HepG2 (cell line): ENCODE measurements at regions of chr17 and their contacts with region 1.

Region 1: GRCh38 chr17:64599827-64600226 is 62.3 kb downstream of the SMURF2 start:
- DNase-seq: no peak
- ATAC-seq: no peak
- H3K4me3 ChIP-seq: no peak overlapping the region
- H3K27ac ChIP-seq: no peak overlapping the region
- H3K4me1 ChIP-seq: peaks cover 17% of the 10 kb centered on the region
- H3K27me3 ChIP-seq: no peaks in the 10 kb centered on the region
- CTCF ChIP-seq: no peak
- EP300 ChIP-seq: no peak
- POLR2A ChIP-seq: no peak
- RAD21 ChIP-seq: no peak

Region 2: DNA sequence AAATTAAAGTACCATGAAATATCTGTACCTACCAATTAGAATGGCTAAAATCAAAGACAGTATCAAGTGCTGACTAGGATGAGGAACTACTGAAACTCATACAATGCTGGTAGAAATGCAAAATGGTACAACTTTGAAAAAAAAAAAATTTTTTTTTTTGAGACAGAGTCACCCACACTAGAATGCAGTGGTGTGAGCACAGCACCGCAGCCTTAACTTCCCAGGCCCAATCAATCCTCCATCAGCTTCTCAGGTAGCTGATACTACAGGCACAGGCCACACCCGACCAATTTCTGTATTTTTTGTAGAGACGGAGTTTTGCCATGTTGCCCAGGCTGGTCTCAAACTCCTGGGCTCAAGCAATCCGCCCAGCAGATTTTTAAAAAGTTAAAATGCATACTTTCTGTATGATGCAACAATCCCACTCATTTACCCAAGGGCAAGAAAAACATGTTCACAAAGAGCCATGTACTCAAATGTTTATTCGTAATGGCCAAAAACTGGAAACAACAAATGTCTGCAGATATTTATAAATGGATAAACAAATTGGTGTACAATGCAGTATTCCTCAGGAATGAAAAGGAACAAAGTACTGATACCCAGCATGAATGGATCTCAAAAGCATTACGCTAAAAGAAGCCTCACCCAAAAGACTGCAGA is 53.6 kb after region 1 on chr17:
- CTCF ChIA-PET with region 1: no interaction called
- POLR2A ChIA-PET with region 1: no interaction called
- in situ Hi-C with region 1: no loop called
- intact Hi-C with region 1: loop called (anchors 5 kb)
- DNase-seq: no peak
- ATAC-seq: no peak
- H3K4me3 ChIP-seq: no peak overlapping the region
- H3K27ac ChIP-seq: peak overlapping the region; percentile 0
- H3K4me1 ChIP-seq: peaks cover 29% of the 10 kb centered on the region
- H3K27me3 ChIP-seq: no peaks in the 10 kb centered on the region
- CTCF ChIP-seq: no peak
- EP300 ChIP-seq: no peak
- POLR2A ChIP-seq: no peak
- RAD21 ChIP-seq: no peak